ENCODE measurements at regions of chr3 and their contacts with region 1.

Region 1: GRCh38 chr3:16319307-16319706 is 54.3 kb downstream of the OXNAD1 start:
- DNase-seq: peak; percentile 97
- H3K4me3 Mint-ChIP-seq: peak overlapping the region; percentile 6
- H3K27ac Mint-ChIP-seq: peak overlapping the region; percentile 95
- H3K4me1 Mint-ChIP-seq: peaks cover 79% of the 10 kb centered on the region
- H3K27me3 Mint-ChIP-seq: no peaks in the 10 kb centered on the region

Region 2: GRCh38 chr3:16264708-16265454 is 54.4 kb before region 1 on chr3 and contains the starts of genes DPH3 and OXNAD1:
- CTCF ChIA-PET with region 1: interaction called, 33 read pairs
- intact Hi-C with region 1: loop called (anchors 1 kb)
- DNase-seq: peak; percentile 100
- H3K4me3 Mint-ChIP-seq: peak within 1 kb of the TSS; percentile 96
- H3K27ac Mint-ChIP-seq: peak within 1 kb of the TSS; percentile 94
- H3K4me1 Mint-ChIP-seq: peaks cover 31% of the 10 kb centered on the region
- H3K27me3 Mint-ChIP-seq: no peaks in the 10 kb centered on the region
- total RNA-seq, gene DPH3: 16.1 to 17.0 TPM
- total RNA-seq, gene OXNAD1: 32.4 to 34.2 TPM

Region 3: DNA sequence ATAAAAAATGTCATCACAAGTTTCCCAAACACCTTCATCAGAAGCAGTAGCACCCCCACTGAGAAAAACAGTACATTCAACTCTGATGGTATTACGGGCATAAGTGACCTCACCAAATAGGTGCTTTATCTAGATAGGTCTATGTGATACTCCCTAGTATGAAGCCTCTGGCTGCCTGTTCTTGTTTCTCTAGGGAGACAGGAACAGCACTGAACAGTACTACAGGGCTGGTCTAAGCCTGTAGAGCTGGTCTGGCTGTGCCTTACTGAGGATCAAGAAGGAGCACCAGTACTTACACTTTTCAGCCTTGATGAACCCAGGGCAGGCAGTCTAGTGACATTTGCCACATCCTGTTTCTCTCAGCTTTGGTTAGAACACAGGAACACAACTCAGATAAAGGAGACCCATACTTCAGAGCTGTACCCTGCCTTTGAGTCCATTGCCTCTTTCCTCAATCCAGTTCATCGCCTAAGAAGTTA is 18.4 kb before region 1 on chr3:
- CTCF ChIA-PET with region 1: interaction called, 222 read pairs
- intact Hi-C with region 1: loop called (anchors 2 kb)
- DNase-seq: peak; percentile 58
- H3K4me3 Mint-ChIP-seq: peak overlapping the region; percentile 62
- H3K27ac Mint-ChIP-seq: peak overlapping the region; percentile 94
- H3K4me1 Mint-ChIP-seq: peaks cover 97% of the 10 kb centered on the region
- H3K27me3 Mint-ChIP-seq: no peaks in the 10 kb centered on the region

Region 4: GRCh38 chr3:16338999-16339398 is 19.7 kb after region 1 on chr3:
- CTCF ChIA-PET with region 1: interaction called, 13 read pairs
- intact Hi-C with region 1: no loop called
- DNase-seq: peak; percentile 36
- H3K4me3 Mint-ChIP-seq: no peak overlapping the region
- H3K27ac Mint-ChIP-seq: peak overlapping the region; percentile 73
- H3K4me1 Mint-ChIP-seq: peaks cover 67% of the 10 kb centered on the region
- H3K27me3 Mint-ChIP-seq: no peaks in the 10 kb centered on the region

Region 5: GRCh38 chr3:16378920-16379319 is 59.6 kb after region 1 on chr3:
- CTCF ChIA-PET with region 1: no interaction called
- intact Hi-C with region 1: loop called (anchors 1 kb)
- DNase-seq: peak; percentile 44
- H3K4me3 Mint-ChIP-seq: no peak overlapping the region
- H3K27ac Mint-ChIP-seq: peak overlapping the region; percentile 80
- H3K4me1 Mint-ChIP-seq: peaks cover 82% of the 10 kb centered on the region
- H3K27me3 Mint-ChIP-seq: no peaks in the 10 kb centered on the region

Region 6: GRCh38 chr3:16388850-16389441 is 69.6 kb after region 1 on chr3:
- CTCF ChIA-PET with region 1: no interaction called
- intact Hi-C with region 1: no loop called
- DNase-seq: no peak
- H3K4me3 Mint-ChIP-seq: no peak overlapping the region
- H3K27ac Mint-ChIP-seq: no peak overlapping the region
- H3K4me1 Mint-ChIP-seq: peaks cover 38% of the 10 kb centered on the region
- H3K27me3 Mint-ChIP-seq: no peaks in the 10 kb centered on the region

Region 7: GRCh38 chr3:16550676-16551341 is 231.5 kb after region 1 on chr3:
- CTCF ChIA-PET with region 1: interaction called, 9 read pairs
- intact Hi-C with region 1: loop called (anchors 1 kb)
- DNase-seq: peak; percentile 94
- H3K4me3 Mint-ChIP-seq: peak overlapping the region; percentile 22
- H3K27ac Mint-ChIP-seq: peak overlapping the region; percentile 77
- H3K4me1 Mint-ChIP-seq: peaks cover 17% of the 10 kb centered on the region
- H3K27me3 Mint-ChIP-seq: no peaks in the 10 kb centered on the region